ENCODE measurements at regions of chr3 and their contacts with region 1.

Region 1: GRCh38 chr3:179811321-179812095 is 158.7 kb downstream of the USP13 start:
- DNase-seq: peak in 4 of 10 donors; percentile 33 to 78 (median 42)

Region 2: GRCh38 chr3:179967622-179968021 is 156.1 kb after region 1 on chr3:
- intact Hi-C with region 1: no loop called
- DNase-seq: no peak

Region 3: GRCh38 chr3:180018543-180018942 is 207.0 kb after region 1 on chr3:
- intact Hi-C with region 1: loop called (anchors 5 kb)
- DNase-seq: peak in 6 of 10 donors; percentile 27 to 85 (median 53)

Measured in posterior cingulate gyrus (tissue), 11 donors.